ENCODE measurements at regions of chr11 and their contacts with region 1.

Region 1: DNA sequence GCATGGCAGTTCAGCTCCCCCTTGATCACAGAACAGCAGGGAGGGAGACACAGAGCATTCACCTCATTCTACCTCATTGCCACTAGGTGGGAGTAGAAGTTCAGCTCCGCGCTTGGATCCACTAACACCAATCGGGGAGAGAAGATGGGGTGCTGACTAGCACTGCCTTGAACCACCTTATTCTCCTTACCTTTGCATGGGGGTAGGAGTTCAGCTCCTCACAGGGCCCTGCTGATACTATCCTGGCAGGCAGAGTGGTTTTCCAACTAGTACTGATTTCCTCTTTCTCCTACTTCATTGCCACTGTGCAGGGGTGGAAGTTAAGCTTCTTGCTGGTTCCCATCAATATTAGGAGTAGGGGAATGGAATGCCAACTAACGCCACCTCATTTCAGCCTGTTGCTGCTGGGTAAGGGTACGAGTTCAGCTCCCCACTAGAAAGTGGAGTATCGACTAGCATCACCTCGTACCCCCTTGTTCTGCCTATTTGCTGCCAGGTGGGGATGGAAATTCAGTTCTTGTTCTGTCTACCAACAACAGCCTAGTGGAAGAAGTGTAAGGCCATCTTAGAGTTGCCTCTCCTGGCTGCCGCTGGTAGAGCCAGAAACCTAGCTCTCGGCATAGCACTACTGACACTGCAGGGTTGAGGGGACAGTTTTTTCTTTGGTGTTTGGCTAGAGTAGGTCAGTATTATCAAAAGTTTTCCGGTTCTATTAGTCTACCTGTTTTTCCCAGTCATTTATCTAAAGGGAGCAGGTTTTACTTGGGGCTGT is 550.9 kb upstream of the CCDC90B start:
- DNase-seq: peak in 4 of 5 donors; percentile 9 to 37 (median 28)
- ATAC-seq: peak; percentile 61 to 94 (median 86)
- H3K4me3 ChIP-seq: no peak overlapping the region
- H3K27ac ChIP-seq: no peak overlapping the region
- H3K4me1 ChIP-seq: no peaks in the 10 kb centered on the region
- H3K27me3 ChIP-seq: no peaks in the 10 kb centered on the region
- CTCF ChIP-seq: peak; percentile 34 to 72 (median 62)
- POLR2A ChIP-seq: no peak

Region 2: DNA sequence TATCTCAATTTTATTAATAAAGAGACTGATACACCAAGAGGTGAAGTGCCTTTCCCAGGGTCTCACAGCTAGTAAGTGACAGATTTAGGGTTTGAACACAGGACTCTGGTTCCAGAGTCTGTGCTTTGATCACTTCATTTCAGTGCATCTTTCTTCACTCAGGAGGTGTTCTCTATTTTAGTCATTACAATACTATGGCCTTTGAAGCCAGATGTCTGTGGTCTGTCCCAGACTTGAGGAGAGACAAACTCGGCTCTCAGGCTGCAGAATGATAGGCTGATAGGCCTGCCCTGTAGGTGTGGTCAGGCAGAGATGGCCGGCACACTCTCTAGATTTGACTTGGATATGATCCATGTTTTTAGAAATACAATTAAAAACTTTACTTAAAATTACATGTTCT is 72.4 kb before region 1 on chr11:
- intact Hi-C with region 1: no loop called
- DNase-seq: no peak
- ATAC-seq: no peak
- H3K4me3 ChIP-seq: no peak overlapping the region
- H3K27ac ChIP-seq: no peak overlapping the region
- H3K4me1 ChIP-seq: no peaks in the 10 kb centered on the region
- H3K27me3 ChIP-seq: no peaks in the 10 kb centered on the region
- CTCF ChIP-seq: no peak
- POLR2A ChIP-seq: no peak

Region 3: DNA sequence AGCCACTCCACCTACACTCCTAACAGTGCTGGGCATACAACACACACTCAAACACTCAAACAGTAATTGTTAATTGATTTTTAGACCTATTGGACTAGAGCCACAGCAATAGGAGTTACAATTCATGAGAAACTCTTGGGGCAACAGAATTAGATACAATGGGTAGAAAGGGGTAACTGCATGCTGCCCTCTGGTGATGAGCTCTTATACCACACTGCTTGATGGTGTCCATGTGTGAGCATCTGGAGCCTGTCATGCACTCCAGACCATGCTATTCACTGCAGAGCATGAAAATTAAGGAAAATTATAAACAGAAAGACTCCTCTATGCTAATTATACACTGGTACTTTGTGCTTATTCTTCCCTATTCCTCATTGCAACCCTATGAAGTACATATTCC is 424.6 kb after region 1 on chr11:
- intact Hi-C with region 1: loop called in 3 of 10 experiments (anchors 5 to 10 kb)
- DNase-seq: no peak
- ATAC-seq: no peak
- H3K4me3 ChIP-seq: no peak overlapping the region
- H3K27ac ChIP-seq: no peak overlapping the region
- H3K4me1 ChIP-seq: no peaks in the 10 kb centered on the region
- H3K27me3 ChIP-seq: no peaks in the 10 kb centered on the region
- CTCF ChIP-seq: peak in 6 of 12 donors; percentile 9 to 23 (median 20)
- POLR2A ChIP-seq: no peak

Region 4: DNA sequence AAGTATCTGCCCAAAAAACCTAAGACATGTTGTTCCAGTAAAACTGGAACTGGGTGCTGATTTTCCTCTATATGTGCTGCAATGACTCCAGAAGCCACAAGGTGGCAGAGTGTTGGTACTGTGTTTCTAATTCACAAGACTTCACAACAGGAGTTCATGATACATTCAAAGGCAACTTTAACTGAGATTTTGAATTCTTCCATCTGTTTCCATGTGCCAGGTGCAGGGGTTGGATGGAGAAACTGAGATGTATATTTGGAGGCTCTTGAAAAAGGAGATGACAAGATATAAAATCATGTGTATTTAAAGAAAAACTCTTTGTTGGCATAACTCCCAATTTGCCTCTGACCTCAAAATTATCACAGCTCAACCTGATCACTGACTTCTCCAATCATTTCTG is 547.7 kb after region 1 on chr11:
- intact Hi-C with region 1: loop called in 4 of 10 experiments (anchors 10 kb)
- DNase-seq: peak in 2 of 5 donors; percentile 24 to 26
- ATAC-seq: no peak
- H3K4me3 ChIP-seq: no peak overlapping the region
- H3K27ac ChIP-seq: no peak overlapping the region
- H3K4me1 ChIP-seq: no peaks in the 10 kb centered on the region
- H3K27me3 ChIP-seq: no peaks in the 10 kb centered on the region
- CTCF ChIP-seq: peak; percentile 68 to 83 (median 78)
- POLR2A ChIP-seq: no peak

Region 5: GRCh38 chr11:84558085-84558905 is 721.2 kb after region 1 on chr11:
- intact Hi-C with region 1: loop called in 1 of 10 experiments (anchors 10 kb)
- DNase-seq: peak in 1 of 5 donors; percentile 12
- ATAC-seq: peak in 3 of 4 donors; percentile 24 to 58 (median 55)
- H3K4me3 ChIP-seq: no peak overlapping the region
- H3K27ac ChIP-seq: no peak overlapping the region
- H3K4me1 ChIP-seq: no peaks in the 10 kb centered on the region
- H3K27me3 ChIP-seq: no peaks in the 10 kb centered on the region
- CTCF ChIP-seq: peak; percentile 57 to 85 (median 72)
- POLR2A ChIP-seq: no peak